OCI-LY7 (cell line): ENCODE measurements at regions of chr3 and their contacts with region 1.

Region 1: GRCh38 chr3:192467230-192468140 is 259.9 kb downstream of the FGF12 start:
- DNase-seq: peak; percentile 69
- H3K4me3 ChIP-seq: no peak overlapping the region
- H3K27ac ChIP-seq: no peak overlapping the region
- H3K4me1 ChIP-seq: no peaks in the 10 kb centered on the region
- CTCF ChIP-seq: peak; percentile 98

Region 2: DNA sequence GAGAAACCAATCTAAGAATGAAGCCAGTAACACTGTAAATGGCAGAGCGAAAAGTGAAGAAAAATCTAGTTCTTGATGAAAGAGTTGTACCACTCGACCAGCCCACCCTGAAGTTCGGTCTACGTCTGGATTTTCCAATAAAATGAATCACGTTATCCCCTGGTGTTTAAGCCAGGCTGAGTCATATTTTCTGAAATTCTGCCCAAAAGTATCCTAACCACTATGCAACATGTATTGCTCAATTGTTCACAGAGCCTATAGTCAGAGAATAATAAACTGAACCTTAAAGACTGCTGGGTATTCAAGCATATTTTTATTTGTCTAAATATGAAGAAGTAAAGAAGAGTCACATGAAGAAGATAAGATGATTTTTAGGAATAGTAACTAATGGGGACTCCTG is 14.2 kb after region 1 on chr3:
- CTCF ChIA-PET with region 1: no interaction called
- POLR2A ChIA-PET with region 1: no interaction called
- intact Hi-C with region 1: no loop called
- DNase-seq: no peak
- H3K4me3 ChIP-seq: no peak overlapping the region
- H3K27ac ChIP-seq: no peak overlapping the region
- H3K4me1 ChIP-seq: no peaks in the 10 kb centered on the region
- CTCF ChIP-seq: no peak

Region 3: GRCh38 chr3:192675958-192676649 is 208.6 kb after region 1 on chr3:
- CTCF ChIA-PET with region 1: no interaction called
- POLR2A ChIA-PET with region 1: no interaction called
- intact Hi-C with region 1: no loop called
- DNase-seq: no peak
- H3K4me3 ChIP-seq: no peak overlapping the region
- H3K27ac ChIP-seq: no peak overlapping the region
- H3K4me1 ChIP-seq: no peaks in the 10 kb centered on the region
- CTCF ChIP-seq: no peak

Region 4: GRCh38 chr3:192802957-192803899 is 335.7 kb after region 1 on chr3:
- CTCF ChIA-PET with region 1: no interaction called
- POLR2A ChIA-PET with region 1: interaction called, 3 read pairs
- intact Hi-C with region 1: loop called (anchors 1 kb)
- DNase-seq: peak; percentile 63
- H3K4me3 ChIP-seq: no peak overlapping the region
- H3K27ac ChIP-seq: no peak overlapping the region
- H3K4me1 ChIP-seq: no peaks in the 10 kb centered on the region
- CTCF ChIP-seq: peak; percentile 82

Region 5: DNA sequence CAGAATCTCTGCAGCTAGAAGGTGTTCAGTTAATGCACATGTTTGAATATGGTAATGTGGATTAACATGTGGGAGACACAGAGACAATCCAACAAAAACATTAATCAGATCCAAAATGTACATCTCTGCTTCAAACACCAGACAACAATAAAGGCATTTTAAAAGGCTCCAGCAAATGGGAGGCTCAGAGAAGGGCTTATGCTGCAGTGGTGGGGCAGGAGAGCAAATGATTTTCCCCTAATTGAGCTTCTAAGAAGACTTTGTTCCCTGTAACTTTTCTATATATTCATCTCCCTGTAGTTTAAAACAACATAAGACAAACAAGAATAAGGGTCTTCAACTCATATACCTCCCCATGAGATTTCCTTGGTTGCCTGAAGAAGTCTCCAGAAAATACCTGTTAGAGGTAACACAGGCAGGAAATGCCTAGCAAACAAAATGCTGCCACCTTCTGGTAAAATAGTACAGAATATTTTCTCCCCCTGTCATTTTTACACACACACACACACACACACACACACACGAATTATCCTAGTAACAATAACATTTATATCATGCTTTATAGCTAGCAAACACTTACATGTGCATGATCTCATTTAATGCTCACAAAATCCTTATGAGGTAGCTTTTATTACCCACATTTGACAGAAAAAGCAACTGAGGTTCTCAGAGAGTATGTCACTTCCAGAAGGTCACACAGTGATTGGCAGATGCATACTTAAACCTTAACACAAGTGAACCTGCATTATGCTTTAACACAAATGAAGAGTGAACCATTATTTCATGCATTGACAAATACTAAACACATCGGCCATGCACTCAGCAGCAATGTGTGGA is 573.6 kb after region 1 on chr3:
- CTCF ChIA-PET with region 1: interaction called, 3 read pairs
- POLR2A ChIA-PET with region 1: no interaction called
- intact Hi-C with region 1: loop called (anchors 5 kb)
- DNase-seq: peak; percentile 56
- H3K4me3 ChIP-seq: no peak overlapping the region
- H3K27ac ChIP-seq: no peak overlapping the region
- H3K4me1 ChIP-seq: no peaks in the 10 kb centered on the region
- CTCF ChIP-seq: peak; percentile 78